ENCODE measurements at regions of chr20 and their contacts with region 1.

Region 1: GRCh38 chr20:48620519-48621254 is 207.1 kb downstream of the PREX1 start:
- DNase-seq: peak; percentile 97
- ATAC-seq: peak; percentile 90
- H3K4me3 Mint-ChIP-seq: peak overlapping the region; percentile 73
- H3K27ac Mint-ChIP-seq: peak overlapping the region; percentile 50
- H3K4me1 Mint-ChIP-seq: peaks cover 8% of the 10 kb centered on the region; the same call in 1 of the 2 replicates
- H3K27me3 Mint-ChIP-seq: no peaks in the 10 kb centered on the region; the same call in 1 of the 2 replicates
- CTCF ChIP-seq: peak; percentile 84

Region 2: DNA sequence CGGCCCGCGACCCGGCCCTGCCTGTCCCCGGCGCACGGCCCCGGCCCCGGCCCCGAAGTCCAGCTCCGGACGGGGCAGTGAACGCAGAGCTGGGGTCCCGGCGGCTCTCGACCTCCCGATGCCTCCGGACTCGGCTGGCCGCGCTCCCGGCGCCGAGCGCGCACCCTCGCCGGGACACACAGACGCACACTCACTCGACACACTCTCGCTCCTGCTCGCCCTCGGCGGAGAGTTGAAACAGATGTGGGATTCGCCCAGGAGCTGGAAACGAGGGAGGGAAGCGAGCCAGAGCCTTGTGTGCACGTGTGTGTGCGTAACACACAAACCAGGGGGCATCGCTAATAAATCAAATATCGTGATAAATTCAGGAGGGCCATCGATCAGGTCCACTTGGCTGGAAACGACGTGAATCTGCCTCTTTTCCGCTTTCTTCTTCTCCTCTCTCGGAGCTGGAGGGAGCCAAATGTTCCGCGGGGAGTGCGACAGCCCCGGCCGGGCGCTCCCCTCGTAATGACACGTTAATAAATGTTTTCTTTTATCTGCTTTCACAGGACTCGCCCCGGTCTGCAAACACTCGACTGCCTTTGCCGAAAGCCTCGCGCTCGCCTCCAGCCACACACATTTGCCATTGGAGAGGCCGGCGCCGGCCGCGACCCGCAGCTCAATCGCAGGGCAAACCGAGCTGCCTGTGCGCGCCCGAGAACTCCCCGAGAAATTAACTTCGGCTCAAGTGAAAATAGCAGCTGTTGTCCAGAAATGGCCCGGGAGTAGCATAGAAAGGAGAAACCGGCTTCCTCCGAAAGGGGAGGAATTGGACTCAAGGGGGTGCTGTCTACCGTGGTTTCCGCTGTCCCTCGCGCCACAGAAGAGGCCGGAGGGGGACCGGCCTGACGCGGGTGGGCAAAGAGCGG is 834.6 kb before region 1 on chr20:
- CTCF ChIA-PET with region 1: interaction called, 30 read pairs
- POLR2A ChIA-PET with region 1: interaction called, 4 read pairs
- DNase-seq: peak; percentile 63
- ATAC-seq: peak; percentile 50
- H3K4me3 Mint-ChIP-seq: peak overlapping the region; percentile 83
- H3K27ac Mint-ChIP-seq: no peak overlapping the region; the same call in 1 of the 2 replicates
- H3K4me1 Mint-ChIP-seq: peaks cover 42% of the 10 kb centered on the region
- H3K27me3 Mint-ChIP-seq: peaks cover 38% of the 10 kb centered on the region
- CTCF ChIP-seq: peak; percentile 35; the same call in 1 of the 2 replicates

Region 3: DNA sequence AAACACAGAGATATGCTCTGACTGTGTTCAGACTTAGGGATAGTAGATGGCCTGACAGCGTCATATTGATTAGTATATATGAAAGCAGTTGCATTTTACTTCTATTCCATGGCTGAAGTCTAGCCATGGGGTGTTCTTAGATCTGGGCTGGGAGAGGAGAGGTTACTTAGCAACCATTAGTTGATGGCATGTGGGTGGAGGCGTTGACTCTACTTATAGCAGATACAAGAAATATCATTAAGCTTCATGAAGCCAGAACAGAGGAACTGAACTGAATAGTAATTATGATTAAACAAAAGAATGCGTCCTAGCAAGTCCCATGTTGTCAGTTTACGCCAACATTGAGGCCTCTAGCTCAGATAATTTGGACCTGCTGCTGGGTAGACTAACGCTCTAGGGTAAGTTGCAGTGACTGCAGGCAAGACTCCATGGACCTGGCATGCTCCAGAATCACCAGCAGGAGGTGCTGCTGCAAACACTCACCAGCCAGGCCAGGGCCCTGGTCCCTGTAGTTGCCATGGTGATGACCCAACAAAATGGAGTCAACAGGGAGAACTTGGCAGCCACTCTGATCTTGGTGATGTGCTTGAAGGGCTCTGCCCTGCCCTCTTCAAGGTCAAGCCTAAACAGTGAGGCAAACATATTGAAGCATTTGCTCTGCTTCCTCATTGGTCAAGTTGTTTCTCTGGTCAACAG is 270.2 kb before region 1 on chr20:
- CTCF ChIA-PET with region 1: interaction called, 13 read pairs
- POLR2A ChIA-PET with region 1: no interaction called
- DNase-seq: peak; percentile 74
- ATAC-seq: peak; percentile 97
- H3K4me3 Mint-ChIP-seq: no peak overlapping the region
- H3K27ac Mint-ChIP-seq: no peak overlapping the region
- H3K4me1 Mint-ChIP-seq: no peaks in the 10 kb centered on the region
- H3K27me3 Mint-ChIP-seq: no peaks in the 10 kb centered on the region
- CTCF ChIP-seq: peak; percentile 68

Region 4: DNA sequence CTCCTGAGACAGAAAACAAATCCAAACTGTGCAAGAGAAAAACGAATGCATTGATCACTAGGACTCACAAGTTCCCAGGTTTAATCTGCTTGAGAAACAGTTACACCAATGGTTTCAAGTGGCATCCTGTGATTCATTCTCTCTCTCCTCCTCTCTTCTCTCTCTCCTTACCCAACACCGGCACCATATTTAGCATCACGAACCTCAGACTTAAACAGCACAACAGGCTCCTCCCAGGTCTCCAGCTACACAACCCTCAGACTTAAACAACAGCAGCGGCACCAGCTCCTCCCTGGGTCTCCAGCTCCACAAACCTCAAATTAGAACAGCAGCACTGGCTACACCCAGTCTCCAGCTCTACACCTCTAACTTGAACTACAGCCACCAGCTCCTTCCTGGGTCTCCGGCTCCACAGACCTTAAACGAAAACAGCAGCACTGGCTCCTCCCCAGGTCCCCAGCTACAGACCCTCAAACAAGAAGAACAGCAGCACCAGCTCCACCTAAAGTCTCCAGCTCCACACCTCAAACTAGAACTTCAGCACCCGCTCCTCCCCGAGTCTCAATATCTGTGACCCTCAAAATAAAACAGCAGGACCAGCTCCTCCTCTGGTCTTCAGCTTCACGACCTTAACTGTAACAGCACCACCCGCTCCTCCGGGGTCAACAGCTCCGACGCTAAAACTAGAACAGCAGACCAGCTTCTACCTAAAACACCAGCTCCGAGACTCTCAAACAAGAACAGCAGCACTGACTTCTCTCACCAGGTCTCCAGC is 148.7 kb before region 1 on chr20:
- CTCF ChIA-PET with region 1: interaction called, 18 read pairs
- POLR2A ChIA-PET with region 1: no interaction called
- DNase-seq: no peak
- ATAC-seq: no peak
- H3K4me3 Mint-ChIP-seq: no peak overlapping the region
- H3K27ac Mint-ChIP-seq: no peak overlapping the region
- H3K4me1 Mint-ChIP-seq: 0 out of 2 replicates have a peak, but pooled peaks cover 3% of the 10 kb centered on the region
- H3K27me3 Mint-ChIP-seq: peaks cover 4% of the 10 kb centered on the region
- CTCF ChIP-seq: no peak

Region 5: GRCh38 chr20:48550610-48551195 is 70.0 kb before region 1 on chr20:
- CTCF ChIA-PET with region 1: interaction called, 12 read pairs
- POLR2A ChIA-PET with region 1: no interaction called
- DNase-seq: no peak
- ATAC-seq: no peak
- H3K4me3 Mint-ChIP-seq: no peak overlapping the region
- H3K27ac Mint-ChIP-seq: no peak overlapping the region
- H3K4me1 Mint-ChIP-seq: no peaks in the 10 kb centered on the region
- H3K27me3 Mint-ChIP-seq: no peaks in the 10 kb centered on the region
- CTCF ChIP-seq: no peak

Region 6: GRCh38 chr20:48603443-48604391 is 17.0 kb before region 1 on chr20:
- CTCF ChIA-PET with region 1: interaction called, 15 read pairs
- POLR2A ChIA-PET with region 1: no interaction called
- DNase-seq: peak; percentile 45
- ATAC-seq: peak; percentile 73
- H3K4me3 Mint-ChIP-seq: no peak overlapping the region
- H3K27ac Mint-ChIP-seq: no peak overlapping the region
- H3K4me1 Mint-ChIP-seq: peaks cover 11% of the 10 kb centered on the region
- H3K27me3 Mint-ChIP-seq: no peaks in the 10 kb centered on the region
- CTCF ChIP-seq: no peak

Region 7: DNA sequence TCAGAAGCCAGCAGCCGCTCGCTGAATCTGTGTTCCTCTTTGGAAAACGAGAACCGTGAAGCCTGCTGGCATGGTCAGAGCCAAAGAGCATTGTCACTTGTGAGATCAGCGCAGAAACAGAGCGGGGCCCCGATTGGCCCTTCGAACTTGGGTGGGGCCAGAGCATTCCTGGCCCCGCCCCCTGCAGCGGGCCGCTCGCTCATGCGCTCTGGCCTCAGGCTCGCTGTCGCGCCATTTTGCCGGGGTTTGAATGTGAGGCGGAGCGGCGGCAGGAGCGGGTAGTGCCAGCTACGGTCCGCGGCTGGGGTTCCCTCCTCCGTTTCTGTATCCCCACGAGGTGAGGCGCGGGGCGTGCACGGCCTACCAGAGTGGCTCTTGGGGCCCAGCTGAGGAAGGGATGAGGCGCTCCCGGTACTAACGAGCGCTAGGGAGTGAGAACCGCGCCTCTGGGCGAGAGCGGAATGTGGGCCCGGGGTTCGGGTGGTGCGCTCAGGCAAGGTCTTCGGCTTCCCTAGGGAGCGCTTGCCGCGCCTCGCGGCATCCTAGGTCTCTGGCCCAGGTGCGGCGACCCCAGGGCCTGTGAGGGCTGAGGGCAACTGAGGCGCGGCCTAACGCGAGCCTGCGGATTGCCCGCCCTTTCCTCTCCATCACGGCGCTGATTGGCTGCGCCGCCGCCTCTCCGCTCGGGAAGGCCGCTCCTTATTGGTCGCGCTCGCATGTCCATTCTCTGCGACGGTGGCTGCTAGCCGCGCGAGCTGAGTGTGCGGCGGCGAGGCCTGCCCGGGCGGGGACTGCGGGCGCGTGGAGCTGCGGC is 425.6 kb after region 1 on chr20 and contains the start of gene CSE1L:
- CTCF ChIA-PET with region 1: no interaction called
- POLR2A ChIA-PET with region 1: no interaction called
- DNase-seq: peak; percentile 92
- ATAC-seq: peak; percentile 90
- H3K4me3 Mint-ChIP-seq: peak within 1 kb of the TSS; percentile 97
- H3K27ac Mint-ChIP-seq: peak within 1 kb of the TSS; percentile 99
- H3K4me1 Mint-ChIP-seq: peaks cover 33% of the 10 kb centered on the region
- H3K27me3 Mint-ChIP-seq: no peaks in the 10 kb centered on the region; the same call in 1 of the 2 replicates
- CTCF ChIP-seq: no peak
- total RNA-seq, gene CSE1L: 192 to 211 TPM (median 204 TPM) in 3 replicates

Measured in WTC11 (cell line).